ENCODE measurements at regions of chr11 and their contacts with region 1.

Region 1: GRCh38 chr11:20127671-20128527 is 32.4 kb downstream of the DBX1 start:
- DNase-seq: peak; percentile 66 to 98 (median 89)

Region 2: DNA sequence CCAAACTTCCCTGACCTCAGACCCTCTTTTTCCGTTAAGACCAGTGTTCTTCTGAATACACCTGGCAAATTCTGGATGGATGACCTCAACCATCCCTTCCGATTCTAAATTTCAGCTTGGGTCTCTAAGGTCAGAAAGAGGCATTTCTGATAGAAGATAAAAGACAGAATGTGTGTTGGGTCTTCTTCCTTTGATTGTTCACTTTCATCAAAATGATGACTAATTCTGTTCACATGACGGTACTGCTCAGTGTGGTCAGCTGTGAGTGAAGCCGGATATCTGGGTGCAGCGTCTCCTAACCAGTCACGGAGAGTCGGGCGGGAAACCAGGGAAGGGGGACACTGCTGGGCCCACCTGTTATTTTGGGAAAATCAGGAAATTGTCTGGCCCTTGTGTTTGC is 566.9 kb before region 1 on chr11:
- intact Hi-C with region 1: loop called (anchors 10 kb)
- DNase-seq: peak in 1 of 10 donors; percentile 77

Region 3: GRCh38 chr11:19903620-19904069 is 224.3 kb before region 1 on chr11:
- intact Hi-C with region 1: loop called (anchors 5 kb)
- DNase-seq: peak; percentile 50 to 94 (median 77)

Region 4: GRCh38 chr11:19951558-19952115 is 176.3 kb before region 1 on chr11:
- intact Hi-C with region 1: loop called (anchors 5 kb)
- DNase-seq: no peak

Region 5: DNA sequence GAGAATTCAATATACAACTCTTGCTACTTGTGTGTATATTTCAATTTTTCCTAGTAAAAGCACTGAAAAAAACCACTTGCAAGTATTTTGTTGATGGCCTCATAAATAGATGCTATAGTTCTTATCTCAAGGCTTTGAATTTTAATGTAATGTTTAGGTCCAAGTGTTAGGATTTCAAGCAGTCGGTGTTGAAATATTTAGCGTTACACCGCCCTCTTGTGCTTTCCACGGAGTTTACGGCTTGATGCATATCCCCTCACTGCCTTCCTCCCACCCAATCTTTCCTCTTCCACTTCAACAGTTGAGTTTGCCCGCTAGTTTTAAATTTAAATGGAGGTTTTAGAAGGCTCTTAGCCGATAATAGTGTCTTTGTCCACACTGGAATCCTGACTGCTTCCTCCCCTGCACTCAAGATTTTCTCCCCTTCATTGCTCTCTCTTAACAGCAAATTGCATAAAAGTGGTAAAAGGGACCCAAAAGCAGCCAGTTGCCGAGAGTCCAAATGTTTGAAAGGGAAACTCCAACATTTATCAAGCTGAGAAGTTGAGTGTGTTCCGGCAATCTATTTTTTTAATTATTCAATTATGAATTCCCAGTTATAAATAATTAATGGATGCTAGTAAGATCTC is 209.7 kb after region 1 on chr11:
- intact Hi-C with region 1: loop called (anchors 1 kb)
- DNase-seq: peak in 4 of 10 donors; percentile 28 to 60 (median 34)

Region 6: GRCh38 chr11:20355221-20356219 is 227.6 kb after region 1 on chr11:
- intact Hi-C with region 1: loop called (anchors 2 kb)
- DNase-seq: peak in 6 of 10 donors; percentile 34 to 89 (median 42)

Region 7: DNA sequence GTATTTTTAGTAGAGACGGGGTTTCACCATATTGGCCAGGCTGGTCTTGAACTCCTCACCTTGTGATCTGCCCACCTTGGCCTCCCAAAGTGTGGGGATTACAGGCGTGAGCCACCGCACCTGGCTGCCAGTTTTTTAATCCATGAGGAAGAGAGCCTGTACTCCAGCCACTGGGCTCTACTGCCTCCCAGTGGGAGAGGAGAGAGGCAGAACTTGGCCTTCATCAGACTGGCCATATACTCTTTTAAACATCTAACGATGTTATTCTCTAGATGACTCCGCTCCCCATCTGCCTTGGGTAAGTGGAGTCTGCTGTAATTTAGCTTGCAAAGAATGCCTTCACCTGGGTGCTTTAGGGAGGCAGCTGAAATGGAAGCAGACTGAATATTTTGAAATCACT is 506.1 kb after region 1 on chr11:
- intact Hi-C with region 1: no loop called
- DNase-seq: no peak

Measured in posterior cingulate gyrus (tissue), 11 donors.